ENCODE measurements at regions of chr11 and their contacts with region 1.

Region 1: GRCh38 chr11:29328961-29329441 is 687.8 kb downstream of the KCNA4 start:
- DNase-seq: peak; percentile 62
- ATAC-seq: peak; percentile 86
- H3K4me3 ChIP-seq: no peak overlapping the region
- H3K27ac ChIP-seq: no peak overlapping the region
- H3K4me1 ChIP-seq: peaks cover 0 to 7% of the 10 kb centered on the region in 2 experiments; a peak in 1 of 4 replicates
- H3K27me3 ChIP-seq: no peaks in the 10 kb centered on the region
- CTCF ChIP-seq: peak; percentile 74 to 81 (median 81)
- POLR2A ChIP-seq: no peak
- RAD21 ChIP-seq: peak; percentile 89

Region 2: GRCh38 chr11:28697920-28698827 is 630.8 kb before region 1 on chr11:
- CTCF ChIA-PET with region 1: no interaction called
- POLR2A ChIA-PET with region 1: no interaction called
- RAD21 ChIA-PET with region 1: no interaction called
- intact Hi-C with region 1: loop called (anchors 5 kb)
- DNase-seq: peak; percentile 46
- ATAC-seq: peak; percentile 67
- H3K4me3 ChIP-seq: no peak overlapping the region
- H3K27ac ChIP-seq: no peak overlapping the region
- H3K4me1 ChIP-seq: peaks cover 17 to 21% of the 10 kb centered on the region in 2 experiments
- H3K27me3 ChIP-seq: no peaks in the 10 kb centered on the region
- CTCF ChIP-seq: peak; percentile 71 to 92 (median 85); a peak in 5 of 6 replicates
- POLR2A ChIP-seq: no peak
- RAD21 ChIP-seq: peak; percentile 85

Region 3: GRCh38 chr11:29100968-29101367 is 228.0 kb before region 1 on chr11:
- CTCF ChIA-PET with region 1: no interaction called
- POLR2A ChIA-PET with region 1: no interaction called
- RAD21 ChIA-PET with region 1: no interaction called
- intact Hi-C with region 1: loop called (anchors 5 kb)
- DNase-seq: no peak
- ATAC-seq: no peak
- H3K4me3 ChIP-seq: no peak overlapping the region
- H3K27ac ChIP-seq: no peak overlapping the region
- H3K4me1 ChIP-seq: no peaks in the 10 kb centered on the region
- H3K27me3 ChIP-seq: no peaks in the 10 kb centered on the region
- CTCF ChIP-seq: no peak
- POLR2A ChIP-seq: no peak
- RAD21 ChIP-seq: no peak

Region 4: GRCh38 chr11:29159552-29160465 is 169.2 kb before region 1 on chr11:
- CTCF ChIA-PET with region 1: interaction called, 12 read pairs
- POLR2A ChIA-PET with region 1: no interaction called
- RAD21 ChIA-PET with region 1: interaction called, 3 read pairs
- intact Hi-C with region 1: loop called (anchors 5 kb)
- DNase-seq: peak; percentile 31
- ATAC-seq: peak; percentile 99
- H3K4me3 ChIP-seq: no peak overlapping the region
- H3K27ac ChIP-seq: no peak overlapping the region
- H3K4me1 ChIP-seq: no peaks in the 10 kb centered on the region
- H3K27me3 ChIP-seq: no peaks in the 10 kb centered on the region
- CTCF ChIP-seq: peak; percentile 53 to 78 (median 65); a peak in 5 of 6 replicates
- POLR2A ChIP-seq: peak; percentile 36
- RAD21 ChIP-seq: peak; percentile 81

Region 5: GRCh38 chr11:29260939-29261705 is 67.9 kb before region 1 on chr11:
- CTCF ChIA-PET with region 1: interaction called, 18 read pairs
- POLR2A ChIA-PET with region 1: no interaction called
- RAD21 ChIA-PET with region 1: interaction called in 1 of 2 experiments, 3 read pairs
- intact Hi-C with region 1: no loop called
- DNase-seq: peak; percentile 76
- ATAC-seq: peak; percentile 100
- H3K4me3 ChIP-seq: no peak overlapping the region
- H3K27ac ChIP-seq: no peak overlapping the region
- H3K4me1 ChIP-seq: peaks cover 0 to 13% of the 10 kb centered on the region in 2 experiments; a peak in 2 of 4 replicates
- H3K27me3 ChIP-seq: no peaks in the 10 kb centered on the region
- CTCF ChIP-seq: peak; percentile 22 to 46 (median 36); a peak in 5 of 6 replicates
- POLR2A ChIP-seq: no peak
- RAD21 ChIP-seq: peak; percentile 55

Region 6: GRCh38 chr11:29272019-29272654 is 56.9 kb before region 1 on chr11:
- CTCF ChIA-PET with region 1: interaction called, 18 read pairs
- POLR2A ChIA-PET with region 1: no interaction called
- RAD21 ChIA-PET with region 1: interaction called, 5 to 6 read pairs
- intact Hi-C with region 1: loop called (anchors 1 kb)
- DNase-seq: peak; percentile 38
- ATAC-seq: peak; percentile 95
- H3K4me3 ChIP-seq: no peak overlapping the region
- H3K27ac ChIP-seq: no peak overlapping the region
- H3K4me1 ChIP-seq: no peaks in the 10 kb centered on the region
- H3K27me3 ChIP-seq: no peaks in the 10 kb centered on the region
- CTCF ChIP-seq: peak; percentile 41 to 57 (median 46); a peak in 5 of 6 replicates
- POLR2A ChIP-seq: no peak
- RAD21 ChIP-seq: peak; percentile 62

Region 7: DNA sequence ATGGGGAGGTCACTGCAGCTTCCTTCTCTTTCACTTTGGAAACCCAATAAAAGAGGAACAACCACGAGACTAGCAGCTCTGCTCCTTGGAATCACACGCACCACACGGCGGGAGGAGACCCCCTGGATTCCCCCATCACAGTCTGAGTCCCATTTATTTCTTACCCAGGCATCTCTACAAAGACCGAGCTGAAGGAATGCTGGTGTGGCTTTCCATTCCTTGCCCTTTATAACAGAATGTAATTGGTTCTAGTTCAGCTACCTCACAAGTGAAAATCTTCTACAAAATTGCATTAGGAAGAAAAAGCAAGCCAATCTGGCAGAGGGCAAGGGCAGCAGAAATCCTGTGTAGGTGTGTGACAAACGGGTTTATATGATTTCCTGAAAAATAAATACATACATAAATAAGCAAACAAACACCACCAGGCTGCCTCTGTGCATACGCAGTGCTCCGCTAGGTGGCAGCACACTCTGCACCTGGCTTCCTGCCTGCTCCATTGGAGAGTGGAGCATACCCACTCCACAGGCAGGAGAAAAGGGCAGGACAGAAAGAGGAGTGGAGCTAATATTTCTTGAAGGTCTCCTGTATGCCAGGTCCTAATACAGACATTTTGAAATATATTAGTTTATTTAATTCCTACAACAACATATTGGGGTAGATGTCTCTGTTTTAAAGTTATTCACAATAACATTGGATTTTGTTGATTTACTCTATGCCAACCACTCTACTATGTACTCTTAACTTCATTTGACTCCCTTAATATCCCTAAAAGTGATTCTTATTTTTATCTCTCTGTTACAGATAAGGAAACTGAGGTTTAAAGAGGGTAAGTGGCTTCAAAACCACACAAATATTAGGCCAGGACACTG is 14.7 kb after region 1 on chr11:
- CTCF ChIA-PET with region 1: interaction called, 14 read pairs
- POLR2A ChIA-PET with region 1: no interaction called
- RAD21 ChIA-PET with region 1: no interaction called
- intact Hi-C with region 1: no loop called
- DNase-seq: peak; percentile 60
- ATAC-seq: peak; percentile 100
- H3K4me3 ChIP-seq: peak overlapping the region in 1 of 2 experiments; percentile 17; a peak in 1 of 4 replicates
- H3K27ac ChIP-seq: no peak overlapping the region
- H3K4me1 ChIP-seq: peaks cover 0 to 5% of the 10 kb centered on the region in 2 experiments; a peak in 1 of 4 replicates
- H3K27me3 ChIP-seq: no peaks in the 10 kb centered on the region
- CTCF ChIP-seq: peak; percentile 51 to 98 (median 94); a peak in 5 of 6 replicates
- POLR2A ChIP-seq: no peak
- RAD21 ChIP-seq: peak; percentile 57